Sigmoid colon (tissue), 7 donors: ENCODE measurements at regions of chr11 and their contacts with region 1.

Region 1: DNA sequence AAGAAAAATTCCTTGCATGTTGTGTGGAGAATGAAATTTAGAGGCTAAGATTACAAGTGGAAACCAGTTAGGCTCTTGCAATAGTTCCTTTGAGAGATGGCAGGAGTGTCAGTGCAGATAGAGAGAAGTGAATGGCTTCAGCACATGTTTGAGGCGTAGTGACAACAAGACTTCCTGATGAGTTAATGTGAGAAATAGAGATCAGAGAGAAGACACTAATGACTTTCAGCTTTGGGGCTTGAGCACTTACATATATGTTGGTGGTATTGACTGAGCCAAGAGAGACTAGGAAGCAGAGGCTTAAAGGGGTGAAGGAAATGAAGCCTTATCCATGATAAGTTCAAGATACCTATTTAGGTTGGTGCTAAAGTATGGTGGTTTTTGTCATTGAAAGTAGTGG is 56.0 kb upstream of the PICALM start:
- DNase-seq: no peak
- H3K4me3 ChIP-seq: no peak overlapping the region
- H3K27ac ChIP-seq: no peak overlapping the region
- H3K4me1 ChIP-seq: peaks cover 0 to 13% (median 5%) of the 10 kb centered on the region in 4 donors
- H3K27me3 ChIP-seq: no peaks in the 10 kb centered on the region
- CTCF ChIP-seq: no peak
- EP300 ChIP-seq: no peak
- POLR2A ChIP-seq: no peak

Region 2: DNA sequence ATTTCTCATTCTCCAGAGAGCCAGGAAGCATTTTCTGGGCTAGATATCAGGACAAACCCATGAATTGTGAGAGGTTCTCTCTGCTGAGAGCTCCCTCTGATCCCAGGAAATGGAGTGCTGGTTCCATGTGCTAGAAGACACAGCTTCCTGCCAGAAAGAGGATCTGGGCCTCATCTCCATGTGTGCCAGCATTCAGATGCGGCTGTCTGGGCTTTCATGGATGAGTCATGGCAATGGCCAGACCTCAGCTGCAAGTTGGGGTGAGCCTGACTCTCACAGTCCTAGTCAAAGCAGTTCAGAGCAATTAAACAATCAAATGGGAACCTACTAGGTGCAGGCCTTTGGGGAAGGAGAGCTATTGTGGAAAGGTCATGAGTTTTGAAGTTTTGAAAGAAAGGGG is 37.4 kb after region 1 on chr11:
- intact Hi-C with region 1: loop called (anchors 5 kb)
- DNase-seq: peak; percentile 91
- H3K4me3 ChIP-seq: no peak overlapping the region
- H3K27ac ChIP-seq: peak overlapping the region; percentile 60 to 79 (median 76)
- H3K4me1 ChIP-seq: peaks cover 0 to 44% (median 34%) of the 10 kb centered on the region in 4 donors
- H3K27me3 ChIP-seq: no peaks in the 10 kb centered on the region
- CTCF ChIP-seq: no peak
- EP300 ChIP-seq: peak in 1 of 4 donors; percentile 5
- POLR2A ChIP-seq: no peak

Region 3: GRCh38 chr11:86473991-86474833 is 349.4 kb after region 1 on chr11:
- intact Hi-C with region 1: no loop called
- DNase-seq: no peak
- H3K4me3 ChIP-seq: no peak overlapping the region
- H3K27ac ChIP-seq: peak overlapping the region in 1 of 4 donors; percentile 31
- H3K4me1 ChIP-seq: peaks cover 0 to 33% (median 5%) of the 10 kb centered on the region in 4 donors
- H3K27me3 ChIP-seq: no peaks in the 10 kb centered on the region
- CTCF ChIP-seq: no peak
- EP300 ChIP-seq: no peak
- POLR2A ChIP-seq: no peak